ENCODE measurements at regions of chr19 and their contacts with region 1.

Region 1: GRCh38 chr19:51367565-51368365 is 1.0 kb downstream of the CLDND2 start:
- DNase-seq: peak; percentile 98
- H3K4me3 ChIP-seq: peak overlapping the region; percentile 64
- H3K27ac ChIP-seq: peak overlapping the region; percentile 76
- H3K4me1 ChIP-seq: peaks cover 9% of the 10 kb centered on the region
- H3K27me3 ChIP-seq: no peaks in the 10 kb centered on the region
- CTCF ChIP-seq: no peak

Region 2: GRCh38 chr19:51338563-51339312 is 29.0 kb before region 1 on chr19:
- CTCF ChIA-PET with region 1: interaction called, 6 read pairs
- POLR2A ChIA-PET with region 1: interaction called, 6 read pairs
- intact Hi-C with region 1: loop called (anchors 2 kb)
- DNase-seq: peak; percentile 86
- H3K4me3 ChIP-seq: peak overlapping the region; percentile 61
- H3K27ac ChIP-seq: peak overlapping the region; percentile 24
- H3K4me1 ChIP-seq: peaks cover 8% of the 10 kb centered on the region
- H3K27me3 ChIP-seq: no peaks in the 10 kb centered on the region
- CTCF ChIP-seq: peak; percentile 89